Right cardiac atrium (tissue), 5 donors: ENCODE measurements at regions of chr9 and their contacts with region 1.

Region 1: GRCh38 chr9:133991913-133992779 is at the start of gene VAV2:
- DNase-seq: peak; percentile 77 to 91 (median 91)
- ATAC-seq: peak; percentile 2 to 38
- H3K4me3 ChIP-seq: peak within 1 kb of the TSS; percentile 85
- H3K27ac ChIP-seq: peak within 1 kb of the TSS; percentile 91
- H3K4me1 ChIP-seq: peaks cover 6% of the 10 kb centered on the region
- H3K27me3 ChIP-seq: no peaks in the 10 kb centered on the region
- total RNA-seq, gene VAV2: 6.3 to 11.4 (median 8.2) TPM

Region 2: DNA sequence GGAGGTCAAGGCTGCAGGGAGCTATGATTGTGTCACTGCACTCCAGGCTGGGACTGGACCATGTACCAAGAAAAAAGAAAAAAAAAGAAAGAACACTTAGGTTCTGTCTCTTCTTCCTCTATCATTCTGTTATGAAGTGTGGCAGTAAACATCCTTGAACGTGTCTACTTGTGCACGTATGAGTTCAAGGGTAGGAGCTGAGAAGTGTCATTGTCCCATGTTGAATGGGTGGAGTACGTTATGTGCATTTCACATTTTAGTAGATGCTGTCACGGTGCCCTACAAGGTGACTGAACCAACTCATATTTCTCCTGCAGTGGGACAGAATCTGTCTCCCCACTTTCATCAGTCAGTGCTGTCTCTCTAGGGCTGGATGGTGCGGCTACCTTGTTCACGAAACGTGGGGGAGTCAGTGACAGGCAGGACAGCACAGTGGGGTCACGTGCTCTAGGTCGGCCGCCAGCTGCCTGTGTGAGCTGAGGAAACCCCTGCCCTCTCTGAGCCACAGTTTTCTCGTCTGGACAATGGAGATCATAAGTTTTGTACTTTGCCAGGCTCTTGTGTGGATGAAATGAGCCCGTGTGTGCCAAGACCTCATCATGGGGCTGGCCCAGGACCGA is 1274.7 kb before region 1 on chr9:
- intact Hi-C with region 1: no loop called
- DNase-seq: no peak
- ATAC-seq: no peak
- H3K4me3 ChIP-seq: no peak overlapping the region
- H3K27ac ChIP-seq: no peak overlapping the region
- H3K4me1 ChIP-seq: no peaks in the 10 kb centered on the region
- H3K27me3 ChIP-seq: no peaks in the 10 kb centered on the region

Region 3: DNA sequence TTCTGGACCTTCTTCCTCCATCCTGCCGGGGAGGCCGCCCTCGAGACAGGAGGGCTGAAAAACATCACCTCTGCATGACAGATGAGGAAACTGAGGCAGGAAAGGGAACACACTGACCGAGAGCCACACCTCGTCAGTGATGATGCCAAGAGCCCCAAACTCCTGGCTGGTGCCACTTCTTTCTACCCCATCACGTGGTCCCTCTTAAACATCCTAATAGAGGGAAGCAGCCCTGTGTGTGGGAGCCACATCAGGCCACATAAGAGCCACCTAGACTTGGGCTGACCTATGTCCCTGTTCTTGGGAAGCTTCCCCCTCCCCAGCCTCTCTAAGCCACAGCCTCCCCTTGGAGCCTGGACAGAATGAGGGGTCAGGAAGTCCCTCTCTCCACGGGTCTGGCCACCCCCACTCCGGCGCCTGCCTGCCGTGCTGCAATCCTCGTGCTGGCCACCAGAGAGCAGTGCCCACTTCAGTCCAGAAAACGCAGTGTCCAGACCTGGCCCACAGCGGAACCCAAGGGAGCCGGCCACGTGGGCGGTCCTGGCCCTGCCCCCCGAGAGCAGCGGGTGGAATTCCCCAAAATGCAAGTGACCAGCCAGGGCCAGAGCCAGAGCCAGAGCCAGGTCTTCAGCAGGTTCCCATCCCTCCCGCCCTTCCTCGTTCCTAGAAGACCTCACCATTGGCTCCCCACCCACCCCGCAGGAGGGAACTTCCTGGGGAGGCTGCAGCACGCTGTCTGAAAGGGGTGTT is 199.2 kb before region 1 on chr9:
- intact Hi-C with region 1: loop called (anchors 1 to 2 kb)
- DNase-seq: peak; percentile 85 to 93 (median 93)
- ATAC-seq: peak; percentile 75 to 78
- H3K4me3 ChIP-seq: no peak overlapping the region
- H3K27ac ChIP-seq: no peak overlapping the region
- H3K4me1 ChIP-seq: no peaks in the 10 kb centered on the region
- H3K27me3 ChIP-seq: no peaks in the 10 kb centered on the region

Region 4: GRCh38 chr9:133948131-133948530 is 44.0 kb before region 1 on chr9:
- intact Hi-C with region 1: loop called in 1 of 4 experiments (anchors 2 kb)
- DNase-seq: peak; percentile 35 to 62 (median 47)
- ATAC-seq: peak in 1 of 2 donors; percentile 15
- H3K4me3 ChIP-seq: no peak overlapping the region
- H3K27ac ChIP-seq: no peak overlapping the region
- H3K4me1 ChIP-seq: peaks cover 3% of the 10 kb centered on the region
- H3K27me3 ChIP-seq: no peaks in the 10 kb centered on the region